ENCODE measurements at regions of chr14 and their contacts with region 1.

Region 1: GRCh38 chr14:65206448-65207096 is 104.3 kb upstream of the MAX start:
- DNase-seq: no peak
- ATAC-seq: peak; percentile 60
- H3K4me3 Mint-ChIP-seq: peak overlapping the region; percentile 76
- H3K27ac Mint-ChIP-seq: peak overlapping the region; percentile 96
- H3K4me1 Mint-ChIP-seq: peaks cover 89% of the 10 kb centered on the region
- H3K27me3 Mint-ChIP-seq: no peaks in the 10 kb centered on the region
- CTCF ChIP-seq: no peak

Region 2: GRCh38 chr14:65164068-65164824 is 42.3 kb before region 1 on chr14:
- CTCF ChIA-PET with region 1: interaction called, 15 read pairs
- POLR2A ChIA-PET with region 1: interaction called, 171 read pairs
- intact Hi-C with region 1: no loop called
- DNase-seq: no peak
- ATAC-seq: peak; percentile 33
- H3K4me3 Mint-ChIP-seq: no peak overlapping the region
- H3K27ac Mint-ChIP-seq: peak overlapping the region; percentile 56
- H3K4me1 Mint-ChIP-seq: peaks cover 53% of the 10 kb centered on the region
- H3K27me3 Mint-ChIP-seq: no peaks in the 10 kb centered on the region
- CTCF ChIP-seq: peak; percentile 29

Region 3: DNA sequence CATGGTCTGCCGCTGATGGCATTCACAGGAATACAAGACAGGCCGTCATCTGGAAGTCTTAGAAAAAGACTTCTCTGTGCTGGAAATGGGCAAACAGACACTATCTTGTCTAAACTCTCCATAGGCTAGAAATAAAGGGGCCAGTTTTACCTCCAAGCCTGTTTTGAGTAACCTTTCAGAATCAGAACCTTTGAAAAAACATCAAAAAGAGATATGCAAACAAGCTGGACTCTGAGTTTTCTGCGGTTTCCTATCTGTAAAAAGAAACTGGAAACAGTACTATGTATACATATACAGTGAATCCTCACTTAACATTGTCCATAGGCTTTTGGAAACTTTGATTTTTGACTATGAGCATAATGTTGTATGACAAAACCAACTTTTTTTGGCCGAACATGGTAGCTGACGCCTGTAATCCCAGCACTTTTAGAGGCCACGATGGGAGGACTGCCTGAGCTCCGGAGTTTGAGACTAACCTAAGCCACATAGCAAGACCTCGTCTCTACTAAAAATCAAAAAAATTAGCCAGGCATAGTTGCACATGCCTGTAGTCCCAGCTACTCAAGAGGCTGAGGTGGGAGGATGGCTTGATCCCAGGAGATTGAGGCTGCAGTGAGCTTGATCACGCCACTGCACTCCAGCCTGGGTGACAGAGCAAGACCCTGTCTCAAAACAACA is 11.4 kb before region 1 on chr14:
- CTCF ChIA-PET with region 1: interaction called, 3 read pairs
- POLR2A ChIA-PET with region 1: interaction called, 73 read pairs
- intact Hi-C with region 1: loop called (anchors 1 kb)
- DNase-seq: no peak
- ATAC-seq: peak; percentile 71
- H3K4me3 Mint-ChIP-seq: peak overlapping the region; percentile 75
- H3K27ac Mint-ChIP-seq: peak overlapping the region; percentile 87
- H3K4me1 Mint-ChIP-seq: peaks cover 49% of the 10 kb centered on the region
- H3K27me3 Mint-ChIP-seq: no peaks in the 10 kb centered on the region
- CTCF ChIP-seq: no peak

Region 4: DNA sequence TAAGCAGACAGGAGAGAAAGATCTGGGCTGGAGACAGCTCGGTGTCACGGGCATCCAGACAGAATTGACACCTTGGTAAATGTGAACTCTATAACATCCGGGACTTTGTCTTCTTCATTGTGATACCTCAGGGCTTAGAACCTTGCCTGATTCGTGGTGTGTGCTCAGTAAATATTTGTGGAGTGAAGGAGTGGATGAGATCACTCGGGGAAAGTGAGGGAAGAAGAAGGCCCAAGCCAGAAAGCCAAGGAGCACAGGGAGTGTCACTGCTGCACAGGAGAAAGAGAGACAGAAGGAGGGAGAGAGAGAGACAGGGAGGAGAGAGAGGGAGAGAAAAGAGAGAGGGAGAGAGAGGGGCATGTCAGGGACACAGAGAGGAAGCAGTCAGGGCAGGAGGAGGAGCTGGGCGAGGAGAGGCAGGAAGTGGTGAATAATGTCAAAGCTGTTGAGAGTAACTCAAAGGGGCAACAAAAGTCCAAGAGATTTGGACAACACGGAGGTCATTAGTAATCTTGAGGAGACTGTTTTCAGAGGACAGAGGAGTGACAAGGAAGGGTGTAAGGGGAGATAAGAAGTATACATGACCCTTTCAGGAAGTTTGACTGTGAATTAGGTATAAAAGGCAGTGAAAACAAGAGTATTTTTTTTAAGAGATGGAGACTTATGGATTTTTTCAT is 37.3 kb after region 1 on chr14:
- CTCF ChIA-PET with region 1: no interaction called
- POLR2A ChIA-PET with region 1: no interaction called
- intact Hi-C with region 1: no loop called
- DNase-seq: no peak
- ATAC-seq: peak; percentile 60
- H3K4me3 Mint-ChIP-seq: no peak overlapping the region
- H3K27ac Mint-ChIP-seq: no peak overlapping the region
- H3K4me1 Mint-ChIP-seq: peaks cover 6% of the 10 kb centered on the region
- H3K27me3 Mint-ChIP-seq: no peaks in the 10 kb centered on the region
- CTCF ChIP-seq: no peak

Region 5: DNA sequence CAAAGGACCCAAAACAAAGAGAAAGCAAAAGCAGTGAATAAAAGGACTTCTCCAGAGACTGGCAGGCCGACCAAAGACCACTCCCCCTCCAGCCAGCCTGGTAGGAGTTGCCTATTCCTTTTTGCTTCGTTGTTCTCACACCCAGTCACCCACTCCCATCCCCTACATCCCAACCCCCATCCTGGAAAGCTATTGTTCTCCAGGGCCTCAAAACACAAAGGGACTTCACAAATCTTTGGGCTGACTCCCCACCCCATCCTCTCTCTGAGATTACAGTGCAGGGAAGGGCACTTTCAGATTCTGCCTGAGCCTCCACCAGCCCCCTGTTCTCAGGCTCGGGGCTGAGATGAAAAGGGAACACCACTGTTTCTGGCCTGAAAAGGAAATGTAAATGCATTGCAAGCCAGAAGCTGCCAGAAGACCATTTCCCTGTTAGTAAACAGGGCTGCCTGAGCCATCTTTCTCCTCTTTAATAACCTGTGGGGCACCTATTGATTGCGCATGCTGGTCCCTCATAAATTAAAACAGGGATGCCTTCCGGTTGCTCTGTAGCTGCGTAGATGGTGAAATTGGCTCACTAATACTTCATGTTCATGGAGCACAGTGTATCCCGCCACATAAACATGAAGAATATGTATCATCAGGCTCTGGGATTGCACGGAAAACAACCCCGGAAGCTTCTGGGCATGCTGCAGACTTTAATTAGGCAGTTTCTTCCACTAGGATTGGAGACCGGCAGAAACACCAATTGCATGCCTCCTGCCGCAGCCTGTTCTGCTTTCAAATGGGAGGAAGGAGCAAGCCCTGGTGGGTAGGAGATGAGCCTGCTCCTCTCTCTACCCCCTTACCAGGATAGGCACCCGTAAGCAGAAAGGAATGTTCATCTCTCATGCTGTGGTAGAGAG is 75.7 kb after region 1 on chr14:
- CTCF ChIA-PET with region 1: interaction called, 4 read pairs
- POLR2A ChIA-PET with region 1: interaction called, 45 read pairs
- intact Hi-C with region 1: loop called (anchors 1 kb)
- DNase-seq: no peak
- ATAC-seq: peak; percentile 13
- H3K4me3 Mint-ChIP-seq: peak overlapping the region; percentile 79
- H3K27ac Mint-ChIP-seq: peak overlapping the region; percentile 93
- H3K4me1 Mint-ChIP-seq: peaks cover 57% of the 10 kb centered on the region
- H3K27me3 Mint-ChIP-seq: no peaks in the 10 kb centered on the region
- CTCF ChIP-seq: no peak

Region 6: GRCh38 chr14:65321370-65321875 is 114.9 kb after region 1 on chr14:
- CTCF ChIA-PET with region 1: interaction called, 3 read pairs
- POLR2A ChIA-PET with region 1: interaction called, 63 read pairs
- intact Hi-C with region 1: no loop called
- DNase-seq: no peak
- ATAC-seq: no peak
- H3K4me3 Mint-ChIP-seq: peak overlapping the region; percentile 21
- H3K27ac Mint-ChIP-seq: peak overlapping the region; percentile 62
- H3K4me1 Mint-ChIP-seq: peaks cover 77% of the 10 kb centered on the region
- H3K27me3 Mint-ChIP-seq: no peaks in the 10 kb centered on the region
- CTCF ChIP-seq: no peak